AG04450 (cell line): ENCODE measurements at regions of chr19 and their contacts with region 1.

Region 1: GRCh38 chr19:43555185-43555770 is 20.0 kb downstream of the XRCC1 start:
- DNase-seq: no peak
- H3K4me3 ChIP-seq: no peak overlapping the region
- H3K27ac ChIP-seq: no peak overlapping the region
- H3K27me3 ChIP-seq: no peaks in the 10 kb centered on the region
- CTCF ChIP-seq: peak; percentile 89

Region 2: GRCh38 chr19:43532962-43533545 is 22.2 kb before region 1 on chr19 and contains the start of gene ZNF575:
- CTCF ChIA-PET with region 1: interaction called, 58 read pairs
- POLR2A ChIA-PET with region 1: interaction called, 4 read pairs
- DNase-seq: peak; percentile 93
- H3K4me3 ChIP-seq: peak within 1 kb of the TSS; percentile 68
- H3K27ac ChIP-seq: peak within 1 kb of the TSS; percentile 91
- H3K27me3 ChIP-seq: no peaks in the 10 kb centered on the region
- CTCF ChIP-seq: no peak
- polyA plus RNA-seq, gene ZNF575: 0.16 and 0.17 TPM in 2 replicates

Region 3: GRCh38 chr19:43575156-43575950 is 20.1 kb after region 1 on chr19 and contains the starts of genes PINLYP and XRCC1:
- CTCF ChIA-PET with region 1: interaction called, 20 read pairs
- POLR2A ChIA-PET with region 1: no interaction called
- DNase-seq: peak; percentile 94
- H3K4me3 ChIP-seq: peak within 1 kb of the TSS; percentile 95
- H3K27ac ChIP-seq: peak within 1 kb of the TSS; percentile 61
- H3K27me3 ChIP-seq: peaks cover 2% of the 10 kb centered on the region
- CTCF ChIP-seq: peak; percentile 6; the same call in 1 of the 2 replicates
- polyA plus RNA-seq, gene PINLYP: 1.8 and 2.7 TPM in 2 replicates
- polyA plus RNA-seq, gene XRCC1: 15.2 and 17.7 TPM in 2 replicates

Region 4: GRCh38 chr19:43651758-43652545 is 96.7 kb after region 1 on chr19:
- CTCF ChIA-PET with region 1: interaction called, 15 read pairs
- POLR2A ChIA-PET with region 1: no interaction called
- DNase-seq: peak; percentile 27
- H3K4me3 ChIP-seq: no peak overlapping the region
- H3K27ac ChIP-seq: no peak overlapping the region
- H3K27me3 ChIP-seq: no peaks in the 10 kb centered on the region
- CTCF ChIP-seq: peak; percentile 83

Region 5: GRCh38 chr19:43809762-43810696 is 254.8 kb after region 1 on chr19:
- CTCF ChIA-PET with region 1: interaction called, 15 read pairs
- POLR2A ChIA-PET with region 1: no interaction called
- DNase-seq: peak; percentile 32
- H3K4me3 ChIP-seq: no peak overlapping the region
- H3K27ac ChIP-seq: no peak overlapping the region
- H3K27me3 ChIP-seq: peaks cover 4% of the 10 kb centered on the region
- CTCF ChIP-seq: peak; percentile 64